ENCODE measurements at regions of chr3 and their contacts with region 1.

Region 1: DNA sequence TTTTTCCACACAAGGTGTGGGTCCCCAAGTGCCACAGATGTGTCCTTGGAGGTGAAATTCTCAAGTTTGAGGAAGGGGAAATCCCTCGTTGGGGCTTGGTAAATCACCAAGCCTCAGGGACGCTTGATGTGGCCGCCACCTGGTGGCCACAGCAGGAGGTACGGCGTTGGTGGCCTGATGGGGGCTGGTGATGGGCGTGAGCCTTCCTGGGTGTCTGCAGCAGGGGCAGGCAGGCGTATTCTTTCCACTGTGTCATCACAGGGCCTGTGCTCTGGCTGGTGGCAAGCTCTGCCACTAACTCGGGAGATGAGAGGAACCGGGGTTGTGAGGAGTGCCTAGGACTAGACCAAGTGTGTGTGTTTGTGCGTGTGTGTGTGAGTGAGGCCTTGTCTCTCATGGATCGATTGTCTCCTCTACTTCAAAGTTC is 4.2 kb downstream of the ACOX2 start:
- DNase-seq: peak; percentile 56 to 87 (median 78)
- ATAC-seq: peak in 3 of 4 donors; percentile 53 to 65 (median 61)
- H3K4me3 ChIP-seq: no peak overlapping the region
- H3K27ac ChIP-seq: no peak overlapping the region
- H3K4me1 ChIP-seq: peaks cover 8 to 50% (median 27%) of the 10 kb centered on the region in 12 donors
- H3K27me3 ChIP-seq: no peaks in the 10 kb centered on the region
- CTCF ChIP-seq: peak; percentile 85 to 95 (median 90)
- POLR2A ChIP-seq: no peak

Region 2: DNA sequence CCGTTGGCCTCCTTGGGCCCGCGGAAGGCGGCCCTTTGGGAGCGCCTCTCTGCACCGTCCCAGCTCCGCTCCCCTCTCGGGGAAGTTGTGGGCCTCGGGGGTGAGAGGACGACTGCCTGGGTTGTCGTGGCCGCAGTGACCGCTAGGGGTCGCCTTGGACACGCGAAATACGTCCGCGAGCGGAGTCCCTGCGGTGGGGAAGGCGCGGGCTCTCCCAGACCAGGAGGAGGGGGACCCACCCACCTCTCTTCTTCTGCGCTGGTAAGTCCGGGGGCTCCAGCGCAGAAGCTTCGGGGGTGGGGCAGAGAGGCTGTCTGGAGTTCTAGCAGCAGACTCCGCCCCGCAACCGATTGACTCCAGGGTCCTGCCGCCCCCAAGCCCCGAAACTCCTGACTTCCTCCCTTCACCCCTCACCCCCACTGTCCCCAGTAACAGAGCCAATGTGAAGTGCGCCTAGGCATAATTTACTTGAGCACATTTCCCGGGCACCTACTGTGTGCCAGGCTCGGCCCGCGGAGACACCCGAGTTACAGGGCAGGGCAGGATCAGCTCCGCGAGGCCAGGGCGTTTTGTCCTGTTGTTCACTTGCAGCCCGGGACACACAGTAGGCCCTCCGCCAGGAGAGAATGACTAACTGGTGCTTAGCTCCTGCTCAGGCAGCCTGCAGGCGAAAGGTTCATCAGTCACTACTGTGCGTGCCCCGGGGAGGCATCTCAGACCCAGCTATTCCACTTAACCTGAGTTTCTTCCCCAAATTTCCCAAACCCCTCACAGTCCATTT is 354.9 kb before region 1 on chr3:
- intact Hi-C with region 1: loop called in 3 of 10 experiments (anchors 10 kb)
- DNase-seq: peak; percentile 89 to 94 (median 91)
- ATAC-seq: peak; percentile 57 to 84 (median 79)
- H3K4me3 ChIP-seq: peak overlapping the region in 10 of 12 donors; percentile 42 to 69 (median 52)
- H3K27ac ChIP-seq: peak overlapping the region in 1 of 12 donors; percentile 1
- H3K4me1 ChIP-seq: peaks cover 0 to 51% (median 30%) of the 10 kb centered on the region in 12 donors
- H3K27me3 ChIP-seq: no peaks in the 10 kb centered on the region
- CTCF ChIP-seq: peak; percentile 90 to 98 (median 93)
- POLR2A ChIP-seq: no peak

Region 3: GRCh38 chr3:58305882-58306711 is 226.7 kb before region 1 on chr3 and contains the starts of genes HTD2 and RPP14:
- intact Hi-C with region 1: loop called in 1 of 10 experiments (anchors 5 kb)
- DNase-seq: peak; percentile 98 to 100 (median 99)
- ATAC-seq: peak; percentile 94 to 97 (median 96)
- H3K4me3 ChIP-seq: peak within 1 kb of the TSS; percentile 80 to 97 (median 86)
- H3K27ac ChIP-seq: peak within 1 kb of the TSS; percentile 90 to 99 (median 96)
- H3K4me1 ChIP-seq: peaks cover 5 to 36% (median 26%) of the 10 kb centered on the region in 12 donors
- H3K27me3 ChIP-seq: peaks cover 0 to 5% (median 0%) of the 10 kb centered on the region in 9 donors
- CTCF ChIP-seq: peak; percentile 95 to 99 (median 96)
- POLR2A ChIP-seq: peak in 1 of 2 donors; percentile 76
- total RNA-seq, gene HTD2: 5.7 to 21.6 (median 12.4) TPM
- total RNA-seq, gene RPP14: 9.6 to 32.4 (median 24.0) TPM

Region 4: DNA sequence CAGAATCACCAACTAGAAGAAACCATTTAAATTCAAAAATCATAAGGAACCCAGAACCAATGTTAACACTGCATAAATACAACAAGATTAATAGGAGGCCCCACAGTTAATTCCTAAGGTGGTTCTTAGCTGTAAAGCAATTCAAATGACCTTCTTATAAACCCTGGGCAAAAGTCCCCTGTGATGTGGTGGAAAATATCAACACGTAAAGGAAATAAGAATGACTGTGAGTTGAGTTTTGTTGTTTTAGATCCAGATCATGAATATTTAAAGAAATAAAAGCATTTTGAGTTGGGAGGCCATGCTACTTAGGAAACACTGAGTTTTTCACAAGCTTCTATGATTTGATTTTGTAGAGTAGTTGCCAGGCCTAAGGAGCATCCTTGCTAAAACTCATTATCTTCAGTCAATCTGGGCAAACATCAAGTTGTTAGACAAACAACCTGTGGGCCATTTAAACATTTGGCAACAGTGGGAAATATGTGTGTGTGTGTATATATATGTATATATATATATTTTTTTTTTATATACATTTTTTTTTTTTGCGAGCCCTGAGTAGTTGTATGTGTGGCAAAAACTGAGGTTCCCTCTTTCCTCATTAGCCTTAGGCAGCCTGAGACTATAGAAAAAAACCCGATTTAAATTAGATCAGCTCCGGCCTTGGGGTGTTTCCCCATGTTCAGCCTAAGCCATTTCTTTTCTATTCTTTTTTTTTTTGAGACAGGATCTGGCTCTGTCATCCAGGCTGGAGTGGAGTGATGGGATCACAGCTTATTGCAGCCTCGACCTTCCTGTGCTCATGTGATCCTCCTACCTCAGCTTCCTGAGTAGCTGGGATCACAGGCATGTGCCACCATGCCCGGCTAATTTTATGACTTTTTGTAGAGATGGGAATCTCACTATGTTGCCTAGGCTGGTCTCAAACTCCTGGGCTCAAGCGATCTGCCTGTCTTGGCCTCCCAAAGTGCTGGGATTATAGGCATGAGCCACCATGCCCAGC is 208.1 kb before region 1 on chr3:
- intact Hi-C with region 1: loop called in 9 of 10 experiments (anchors 5 kb)
- DNase-seq: no peak
- ATAC-seq: peak in 1 of 4 donors; percentile 12
- H3K4me3 ChIP-seq: no peak overlapping the region
- H3K27ac ChIP-seq: peak overlapping the region in 8 of 12 donors; percentile 0 to 67 (median 23)
- H3K4me1 ChIP-seq: peaks cover 0 to 23% (median 10%) of the 10 kb centered on the region in 12 donors
- H3K27me3 ChIP-seq: no peaks in the 10 kb centered on the region
- CTCF ChIP-seq: no peak
- POLR2A ChIP-seq: no peak

Region 5: GRCh38 chr3:58433400-58434169 is 99.2 kb before region 1 on chr3 and contains the start of gene PDHB:
- intact Hi-C with region 1: loop called in 3 of 10 experiments (anchors 10 kb)
- DNase-seq: peak; percentile 93 to 96 (median 95)
- ATAC-seq: peak; percentile 95 to 99 (median 98)
- H3K4me3 ChIP-seq: peak within 1 kb of the TSS; percentile 44 to 87 (median 76)
- H3K27ac ChIP-seq: peak within 1 kb of the TSS; percentile 87 to 97 (median 92)
- H3K4me1 ChIP-seq: peaks cover 2 to 35% (median 24%) of the 10 kb centered on the region in 12 donors
- H3K27me3 ChIP-seq: no peaks in the 10 kb centered on the region
- CTCF ChIP-seq: peak in 1 of 12 donors; percentile 6
- POLR2A ChIP-seq: peak in 1 of 2 donors; percentile 79
- total RNA-seq, gene PDHB: 154 to 274 (median 192) TPM

Region 6: GRCh38 chr3:58491506-58492402 is 41.1 kb before region 1 on chr3 and contains the start of gene KCTD6:
- intact Hi-C with region 1: loop called in 7 of 10 experiments (anchors 2 to 5 kb)
- DNase-seq: peak; percentile 94 to 98 (median 95)
- ATAC-seq: peak; percentile 94 to 99 (median 96)
- H3K4me3 ChIP-seq: peak within 1 kb of the TSS; percentile 61 to 99 (median 77)
- H3K27ac ChIP-seq: peak within 1 kb of the TSS; percentile 67 to 90 (median 82)
- H3K4me1 ChIP-seq: peaks cover 6 to 65% (median 46%) of the 10 kb centered on the region in 12 donors
- H3K27me3 ChIP-seq: no peaks in the 10 kb centered on the region
- CTCF ChIP-seq: peak; percentile 46 to 87 (median 76)
- POLR2A ChIP-seq: peak in 1 of 2 donors; percentile 27
- total RNA-seq, gene KCTD6: 5.7 to 10.5 (median 6.9) TPM

Region 7: GRCh38 chr3:59107856-59108815 is 575.3 kb after region 1 on chr3:
- intact Hi-C with region 1: no loop called
- DNase-seq: no peak
- ATAC-seq: peak in 1 of 4 donors; percentile 30
- H3K4me3 ChIP-seq: no peak overlapping the region
- H3K27ac ChIP-seq: no peak overlapping the region
- H3K4me1 ChIP-seq: no peaks in the 10 kb centered on the region
- H3K27me3 ChIP-seq: no peaks in the 10 kb centered on the region
- CTCF ChIP-seq: no peak
- POLR2A ChIP-seq: no peak

Measured in heart left ventricle (tissue), 16 donors.